Lower leg skin (tissue), 4 donors: ENCODE measurements at regions of chr6 and their contacts with region 1.

Region 1: DNA sequence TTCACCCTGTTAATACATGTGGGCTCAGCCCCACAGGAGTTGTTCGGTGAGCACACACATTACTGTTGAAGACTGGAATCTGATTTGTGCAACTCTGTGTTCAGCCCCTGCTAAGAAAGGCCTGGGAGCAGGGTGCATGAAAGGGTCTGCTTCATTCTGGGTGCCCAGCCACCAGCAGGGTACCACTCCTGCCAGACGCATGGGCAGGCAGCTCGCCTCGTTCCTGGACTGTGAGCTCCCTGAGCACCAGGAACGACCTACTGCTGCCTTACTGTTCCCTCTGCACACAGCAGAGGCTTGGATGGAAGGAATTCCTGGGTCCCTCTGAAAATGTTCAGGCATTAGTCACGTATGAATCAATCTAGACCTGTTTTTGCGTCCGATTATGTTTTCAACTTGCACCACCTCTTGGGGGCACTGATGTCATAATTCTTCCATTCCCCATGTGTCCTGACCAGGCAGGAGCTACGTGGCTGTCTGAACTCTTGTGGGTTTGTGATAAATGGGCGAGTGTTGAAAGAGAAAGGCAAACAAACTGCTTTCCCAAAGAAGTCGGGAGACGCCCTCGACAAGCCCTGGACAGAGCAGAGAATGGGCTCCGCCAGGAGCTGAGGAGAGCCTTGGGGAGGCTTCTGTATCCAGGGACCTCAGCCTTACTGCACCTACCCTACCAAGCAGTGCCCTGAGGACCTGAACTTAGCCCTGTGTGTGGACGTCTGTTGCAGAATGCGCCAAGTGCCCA is 123.9 kb downstream of the LY86 start:
- DNase-seq: no peak
- H3K4me3 ChIP-seq: no peak overlapping the region
- CTCF ChIP-seq: no peak
- POLR2A ChIP-seq: no peak

Region 2: DNA sequence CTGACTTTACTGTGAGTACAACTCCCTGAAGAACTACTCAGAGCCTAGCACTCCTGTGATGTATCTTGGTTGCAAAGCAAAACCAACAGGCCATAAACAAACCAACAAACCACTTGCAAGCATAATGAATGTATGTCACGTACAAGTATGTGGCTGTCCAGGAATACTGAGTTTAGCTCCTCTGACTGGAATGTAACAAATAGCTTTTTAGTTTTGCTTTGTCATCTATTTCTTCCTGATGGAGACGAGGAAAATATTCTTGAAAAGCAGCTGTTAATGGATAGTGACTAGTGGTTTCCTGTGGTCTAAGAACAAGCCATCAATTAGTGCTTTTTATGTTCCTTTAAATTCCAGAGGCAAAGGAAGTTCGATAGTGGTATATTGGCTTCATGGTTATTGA is 225.8 kb before region 1 on chr6:
- intact Hi-C with region 1: no loop called
- DNase-seq: no peak
- H3K4me3 ChIP-seq: no peak overlapping the region
- CTCF ChIP-seq: no peak
- POLR2A ChIP-seq: no peak

Region 3: GRCh38 chr6:6659600-6660327 is 52.7 kb before region 1 on chr6:
- intact Hi-C with region 1: no loop called
- DNase-seq: peak; percentile 48 to 77
- H3K4me3 ChIP-seq: no peak overlapping the region
- CTCF ChIP-seq: no peak
- POLR2A ChIP-seq: no peak

Region 4: GRCh38 chr6:6942091-6942490 is 229.7 kb after region 1 on chr6:
- intact Hi-C with region 1: no loop called
- DNase-seq: peak in 1 of 2 donors; percentile 49
- H3K4me3 ChIP-seq: no peak overlapping the region
- CTCF ChIP-seq: no peak
- POLR2A ChIP-seq: no peak

Region 5: GRCh38 chr6:8579372-8579771 is 1866.9 kb after region 1 on chr6:
- intact Hi-C with region 1: loop called (anchors 5 kb)
- DNase-seq: no peak
- H3K4me3 ChIP-seq: no peak overlapping the region
- CTCF ChIP-seq: no peak
- POLR2A ChIP-seq: no peak